CD8-positive, alpha-beta T cell (primary cell): ENCODE measurements at regions of chr4 and their contacts with region 1.

Region 1: GRCh38 chr4:121726642-121727268 is 30.0 kb upstream of the ANXA5 start:
- DNase-seq: peak in 3 of 9 experiments; percentile 4 to 70 (median 59)
- ATAC-seq: peak; percentile 87
- H3K4me3 ChIP-seq: no peak overlapping the region
- H3K4me3 Mint-ChIP-seq: no peak overlapping the region
- H3K27ac ChIP-seq: no peak overlapping the region
- H3K27ac Mint-ChIP-seq: no peak overlapping the region
- H3K4me1 ChIP-seq: no peaks in the 10 kb centered on the region
- H3K4me1 Mint-ChIP-seq: no peaks in the 10 kb centered on the region
- H3K27me3 ChIP-seq: no peaks in the 10 kb centered on the region
- H3K27me3 Mint-ChIP-seq: no peaks in the 10 kb centered on the region
- CTCF ChIP-seq: peak; percentile 49

Region 2: GRCh38 chr4:121353213-121353612 is 373.5 kb before region 1 on chr4:
- CTCF ChIA-PET with region 1: no interaction called
- POLR2A ChIA-PET with region 1: no interaction called
- intact Hi-C with region 1: no loop called
- DNase-seq: no peak
- ATAC-seq: no peak
- H3K4me3 ChIP-seq: no peak overlapping the region
- H3K4me3 Mint-ChIP-seq: no peak overlapping the region
- H3K27ac ChIP-seq: no peak overlapping the region
- H3K27ac Mint-ChIP-seq: no peak overlapping the region
- H3K4me1 ChIP-seq: no peaks in the 10 kb centered on the region
- H3K4me1 Mint-ChIP-seq: no peaks in the 10 kb centered on the region
- H3K27me3 ChIP-seq: no peaks in the 10 kb centered on the region
- H3K27me3 Mint-ChIP-seq: peaks cover 35% of the 10 kb centered on the region
- CTCF ChIP-seq: no peak

Region 3: GRCh38 chr4:121370729-121371325 is 355.9 kb before region 1 on chr4:
- CTCF ChIA-PET with region 1: no interaction called
- POLR2A ChIA-PET with region 1: no interaction called
- intact Hi-C with region 1: loop called (anchors 5 kb)
- DNase-seq: peak in 4 of 9 experiments; percentile 23 to 43 (median 30)
- ATAC-seq: no peak
- H3K4me3 ChIP-seq: no peak overlapping the region
- H3K4me3 Mint-ChIP-seq: no peak overlapping the region
- H3K27ac ChIP-seq: no peak overlapping the region
- H3K27ac Mint-ChIP-seq: no peak overlapping the region
- H3K4me1 ChIP-seq: no peaks in the 10 kb centered on the region
- H3K4me1 Mint-ChIP-seq: no peaks in the 10 kb centered on the region
- H3K27me3 ChIP-seq: no peaks in the 10 kb centered on the region
- H3K27me3 Mint-ChIP-seq: peaks cover 9% of the 10 kb centered on the region
- CTCF ChIP-seq: peak; percentile 44

Region 4: DNA sequence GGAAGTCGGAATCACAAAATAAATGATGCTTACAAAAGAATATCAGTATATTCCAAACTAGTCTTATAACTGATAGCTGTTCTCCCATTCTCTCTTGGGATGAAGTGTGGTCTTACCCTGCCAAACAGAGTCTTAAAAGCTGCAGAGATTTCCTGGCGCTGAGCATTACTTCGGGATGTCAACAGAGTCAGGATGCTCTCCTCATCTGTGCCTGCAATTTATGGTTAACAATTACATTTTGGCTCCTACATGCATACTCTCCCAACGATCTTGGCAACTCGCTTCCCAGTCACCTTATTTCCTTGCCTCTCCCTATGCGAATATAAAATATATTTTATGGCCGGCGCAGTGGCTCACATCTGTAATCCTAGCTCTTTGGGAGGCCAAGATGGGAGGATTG is 42.2 kb before region 1 on chr4:
- CTCF ChIA-PET with region 1: no interaction called
- POLR2A ChIA-PET with region 1: interaction called, 3 read pairs
- intact Hi-C with region 1: loop called in 1 of 2 experiments (anchors 5 kb)
- DNase-seq: no peak
- ATAC-seq: no peak
- H3K4me3 ChIP-seq: no peak overlapping the region
- H3K4me3 Mint-ChIP-seq: no peak overlapping the region
- H3K27ac ChIP-seq: no peak overlapping the region
- H3K27ac Mint-ChIP-seq: no peak overlapping the region
- H3K4me1 ChIP-seq: no peaks in the 10 kb centered on the region
- H3K4me1 Mint-ChIP-seq: no peaks in the 10 kb centered on the region
- H3K27me3 ChIP-seq: no peaks in the 10 kb centered on the region
- H3K27me3 Mint-ChIP-seq: no peaks in the 10 kb centered on the region
- CTCF ChIP-seq: no peak

Region 5: GRCh38 chr4:121696581-121697461 is 29.9 kb before region 1 on chr4 and contains the start of gene ANXA5:
- CTCF ChIA-PET with region 1: no interaction called
- POLR2A ChIA-PET with region 1: no interaction called
- intact Hi-C with region 1: loop called in 1 of 2 experiments (anchors 1 kb)
- DNase-seq: peak; percentile 37 to 80 (median 63)
- ATAC-seq: peak; percentile 76
- H3K4me3 ChIP-seq: peak within 1 kb of the TSS; percentile 67 to 79
- H3K4me3 Mint-ChIP-seq: peak within 1 kb of the TSS; percentile 91
- H3K27ac ChIP-seq: peak within 1 kb of the TSS; percentile 61 to 68
- H3K27ac Mint-ChIP-seq: peak within 1 kb of the TSS; percentile 91
- H3K4me1 ChIP-seq: peaks cover 8% of the 10 kb centered on the region
- H3K4me1 Mint-ChIP-seq: peaks cover 26% of the 10 kb centered on the region
- H3K27me3 ChIP-seq: peaks cover 0 to 6% of the 10 kb centered on the region in 2 experiments
- H3K27me3 Mint-ChIP-seq: peaks cover 4% of the 10 kb centered on the region
- CTCF ChIP-seq: no peak
- total RNA-seq, gene ANXA5: 26.8 to 28.2 TPM

Region 6: DNA sequence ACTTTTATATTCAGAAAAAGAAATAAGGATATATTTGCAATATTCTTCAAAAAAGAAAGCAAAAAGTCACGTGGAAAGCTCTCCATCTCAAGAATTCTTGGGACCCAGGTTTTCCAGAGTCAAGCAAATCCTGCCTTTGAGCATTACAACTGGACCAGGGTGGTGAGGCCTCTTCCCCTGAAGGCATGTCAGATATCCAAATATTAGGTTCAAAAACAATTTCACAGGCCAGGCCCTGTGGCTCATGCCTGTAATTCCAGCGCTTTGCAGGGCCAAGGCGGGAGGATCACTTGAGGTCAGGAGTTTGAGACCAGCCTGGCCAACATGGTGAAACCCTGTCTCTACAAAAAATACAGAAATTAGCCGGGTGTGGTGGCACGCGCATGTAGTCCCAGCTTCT is 17.9 kb after region 1 on chr4:
- CTCF ChIA-PET with region 1: no interaction called
- POLR2A ChIA-PET with region 1: no interaction called
- intact Hi-C with region 1: no loop called
- DNase-seq: no peak
- ATAC-seq: no peak
- H3K4me3 ChIP-seq: no peak overlapping the region
- H3K4me3 Mint-ChIP-seq: no peak overlapping the region
- H3K27ac ChIP-seq: no peak overlapping the region
- H3K27ac Mint-ChIP-seq: no peak overlapping the region
- H3K4me1 ChIP-seq: no peaks in the 10 kb centered on the region
- H3K4me1 Mint-ChIP-seq: no peaks in the 10 kb centered on the region
- H3K27me3 ChIP-seq: no peaks in the 10 kb centered on the region
- H3K27me3 Mint-ChIP-seq: peaks cover 7% of the 10 kb centered on the region
- CTCF ChIP-seq: no peak